Naive thymus-derived CD4-positive, alpha-beta T cell (primary cell): ENCODE measurements at regions of chr20 and their contacts with region 1.

Region 1: DNA sequence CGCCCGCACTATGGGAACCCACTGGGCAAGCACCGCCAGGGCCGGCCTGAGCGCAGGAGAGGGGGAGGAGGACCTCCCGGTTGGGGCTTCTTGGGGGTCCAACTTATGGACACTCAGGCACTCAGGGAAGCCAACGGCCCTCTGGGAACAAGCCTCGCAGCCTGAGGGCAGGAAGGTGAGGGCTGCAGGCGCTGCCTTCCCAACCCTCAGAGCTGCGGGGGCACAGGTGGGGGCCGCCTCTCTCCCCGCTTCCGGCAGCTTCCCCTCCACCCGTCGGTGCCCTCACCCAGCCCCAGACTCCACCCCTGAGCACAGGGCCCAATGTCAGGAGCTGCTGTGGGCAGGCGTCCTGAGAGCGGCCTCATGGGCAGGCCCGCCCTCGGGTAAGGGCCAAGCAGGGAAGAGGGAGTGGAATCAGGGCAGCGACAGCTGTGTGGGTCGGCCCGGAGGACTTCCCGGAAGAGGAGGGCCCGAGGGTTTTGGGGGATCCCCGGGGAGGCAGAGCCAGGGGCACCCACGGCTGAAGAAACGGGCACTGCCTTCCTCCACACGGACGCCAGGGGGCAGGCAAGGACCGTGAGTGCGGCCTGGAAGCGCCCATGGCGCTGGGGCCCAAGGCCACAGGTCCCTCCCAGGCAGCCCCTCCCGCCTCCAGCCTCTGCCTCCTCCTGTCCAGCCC is 488 bp upstream of the PTK6 start:
- DNase-seq: peak; percentile 88 to 97 (median 92)
- ATAC-seq: peak; percentile 94
- H3K4me3 ChIP-seq: peak overlapping the region; percentile 68
- H3K4me3 Mint-ChIP-seq: peak overlapping the region; percentile 48 to 86 (median 75)
- H3K27ac ChIP-seq: peak overlapping the region; percentile 83
- H3K27ac Mint-ChIP-seq: peak overlapping the region; percentile 36 to 91 (median 78)
- H3K4me1 ChIP-seq: peaks cover 15 to 21% of the 10 kb centered on the region in 2 donors
- H3K4me1 Mint-ChIP-seq: peaks cover 0 to 11% (median 7%) of the 10 kb centered on the region in 7 donors
- H3K27me3 ChIP-seq: no peaks in the 10 kb centered on the region
- H3K27me3 Mint-ChIP-seq: no peaks in the 10 kb centered on the region

Region 2: GRCh38 chr20:63409459-63410435 is 127.9 kb before region 1 on chr20:
- CTCF ChIA-PET with region 1: no interaction called
- POLR2A ChIA-PET with region 1: no interaction called
- intact Hi-C with region 1: no loop called
- DNase-seq: peak in 3 of 9 donors; percentile 21 to 39 (median 23)
- ATAC-seq: no peak
- H3K4me3 ChIP-seq: no peak overlapping the region
- H3K4me3 Mint-ChIP-seq: peak overlapping the region in 2 of 10 donors; percentile 9 to 48
- H3K27ac ChIP-seq: no peak overlapping the region
- H3K27ac Mint-ChIP-seq: peak overlapping the region in 1 of 9 donors; percentile 75
- H3K4me1 ChIP-seq: peaks cover 0 to 6% of the 10 kb centered on the region in 2 donors
- H3K4me1 Mint-ChIP-seq: peaks cover 3 to 15% (median 9%) of the 10 kb centered on the region in 7 donors
- H3K27me3 ChIP-seq: no peaks in the 10 kb centered on the region
- H3K27me3 Mint-ChIP-seq: peaks cover 0 to 4% (median 0%) of the 10 kb centered on the region in 5 donors

Region 3: DNA sequence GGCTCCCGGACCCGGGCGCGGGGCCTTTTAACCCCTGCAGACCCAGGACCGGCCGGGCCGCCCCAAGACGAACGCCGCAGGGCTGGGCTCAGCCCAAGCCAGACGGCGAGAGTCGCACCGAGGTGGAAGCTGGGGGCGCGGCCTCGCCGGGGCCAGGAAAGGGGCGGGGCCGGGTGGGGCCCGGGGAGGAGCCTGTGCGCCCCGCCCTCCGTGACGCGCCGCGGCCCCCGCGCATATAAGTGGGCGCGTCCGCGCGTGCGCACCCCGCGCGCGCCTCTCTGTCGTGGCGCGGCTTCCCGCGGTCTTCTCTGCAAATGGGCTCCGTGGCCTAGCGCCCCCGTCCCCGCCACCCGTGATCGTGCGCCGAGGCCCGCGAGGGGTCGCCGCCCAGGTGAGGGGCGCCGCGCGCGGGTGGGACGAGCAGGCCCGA is 17.1 kb before region 1 on chr20 and contains the start of gene PPDPF:
- CTCF ChIA-PET with region 1: interaction called, 5 read pairs
- POLR2A ChIA-PET with region 1: interaction called, 89 read pairs
- intact Hi-C with region 1: loop called (anchors 1 kb)
- DNase-seq: peak; percentile 76 to 92 (median 84)
- ATAC-seq: peak; percentile 96
- H3K4me3 ChIP-seq: peak within 1 kb of the TSS; percentile 86
- H3K4me3 Mint-ChIP-seq: peak within 1 kb of the TSS; percentile 65 to 89 (median 81)
- H3K27ac ChIP-seq: peak within 1 kb of the TSS; percentile 88
- H3K27ac Mint-ChIP-seq: peak within 1 kb of the TSS in 7 of 9 donors; percentile 51 to 88 (median 79)
- H3K4me1 ChIP-seq: peaks cover 11 to 14% of the 10 kb centered on the region in 2 donors
- H3K4me1 Mint-ChIP-seq: peaks cover 4 to 22% (median 9%) of the 10 kb centered on the region in 7 donors
- H3K27me3 ChIP-seq: no peaks in the 10 kb centered on the region
- H3K27me3 Mint-ChIP-seq: peaks cover 0 to 7% (median 0%) of the 10 kb centered on the region in 5 donors
- total RNA-seq, gene PPDPF: 138 to 225 (median 184) TPM

Region 4: DNA sequence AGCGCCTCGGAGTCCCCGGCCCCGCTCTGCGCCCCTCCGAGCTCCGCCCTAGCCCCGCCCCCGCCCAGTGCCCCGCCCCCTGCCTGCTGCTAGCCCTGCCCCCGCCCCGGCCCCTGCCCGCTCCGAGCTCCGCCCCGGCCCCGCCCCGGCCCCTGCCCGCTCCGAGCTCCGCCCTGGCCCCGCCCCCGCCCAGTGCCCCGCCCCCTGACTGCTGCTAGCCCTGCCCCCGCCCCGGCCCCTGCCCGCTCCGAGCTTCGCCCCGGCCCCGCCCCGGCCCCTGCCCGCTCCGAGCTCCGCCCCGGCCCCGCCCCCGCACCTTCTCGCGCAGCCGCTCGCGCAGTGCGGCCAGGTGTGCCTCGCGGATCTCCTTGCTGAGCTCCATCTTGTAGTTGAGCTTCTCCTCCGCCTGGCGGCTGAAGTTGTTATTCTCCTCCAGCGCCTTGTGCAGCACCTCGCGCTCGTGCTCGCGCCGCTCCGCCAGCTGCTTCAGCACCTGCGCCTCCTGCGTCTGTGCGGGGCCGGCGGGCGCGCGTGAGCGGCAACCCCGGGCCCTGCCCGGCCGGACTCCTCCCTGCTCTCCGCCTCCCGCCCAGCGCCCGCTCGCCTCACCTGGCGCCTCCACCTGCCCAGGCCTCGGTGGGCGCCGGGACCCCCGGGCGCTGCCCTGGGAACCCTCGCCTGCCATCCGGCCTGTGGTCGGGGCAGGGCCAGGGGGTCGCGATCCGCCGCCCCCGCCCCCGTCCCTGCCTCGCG is 104.3 kb after region 1 on chr20:
- CTCF ChIA-PET with region 1: interaction called, 9 read pairs
- POLR2A ChIA-PET with region 1: interaction called, 14 read pairs
- intact Hi-C with region 1: loop called (anchors 1 kb)
- DNase-seq: peak; percentile 94 to 98 (median 97)
- ATAC-seq: peak; percentile 86
- H3K4me3 ChIP-seq: peak overlapping the region; percentile 89
- H3K4me3 Mint-ChIP-seq: peak overlapping the region; percentile 57 to 92 (median 76)
- H3K27ac ChIP-seq: peak overlapping the region; percentile 90
- H3K27ac Mint-ChIP-seq: peak overlapping the region; percentile 66 to 98 (median 85)
- H3K4me1 ChIP-seq: peaks cover 23 to 24% of the 10 kb centered on the region in 2 donors
- H3K4me1 Mint-ChIP-seq: peaks cover 16 to 41% (median 28%) of the 10 kb centered on the region in 7 donors
- H3K27me3 ChIP-seq: no peaks in the 10 kb centered on the region
- H3K27me3 Mint-ChIP-seq: peaks cover 0 to 2% (median 0%) of the 10 kb centered on the region in 5 donors

Region 5: DNA sequence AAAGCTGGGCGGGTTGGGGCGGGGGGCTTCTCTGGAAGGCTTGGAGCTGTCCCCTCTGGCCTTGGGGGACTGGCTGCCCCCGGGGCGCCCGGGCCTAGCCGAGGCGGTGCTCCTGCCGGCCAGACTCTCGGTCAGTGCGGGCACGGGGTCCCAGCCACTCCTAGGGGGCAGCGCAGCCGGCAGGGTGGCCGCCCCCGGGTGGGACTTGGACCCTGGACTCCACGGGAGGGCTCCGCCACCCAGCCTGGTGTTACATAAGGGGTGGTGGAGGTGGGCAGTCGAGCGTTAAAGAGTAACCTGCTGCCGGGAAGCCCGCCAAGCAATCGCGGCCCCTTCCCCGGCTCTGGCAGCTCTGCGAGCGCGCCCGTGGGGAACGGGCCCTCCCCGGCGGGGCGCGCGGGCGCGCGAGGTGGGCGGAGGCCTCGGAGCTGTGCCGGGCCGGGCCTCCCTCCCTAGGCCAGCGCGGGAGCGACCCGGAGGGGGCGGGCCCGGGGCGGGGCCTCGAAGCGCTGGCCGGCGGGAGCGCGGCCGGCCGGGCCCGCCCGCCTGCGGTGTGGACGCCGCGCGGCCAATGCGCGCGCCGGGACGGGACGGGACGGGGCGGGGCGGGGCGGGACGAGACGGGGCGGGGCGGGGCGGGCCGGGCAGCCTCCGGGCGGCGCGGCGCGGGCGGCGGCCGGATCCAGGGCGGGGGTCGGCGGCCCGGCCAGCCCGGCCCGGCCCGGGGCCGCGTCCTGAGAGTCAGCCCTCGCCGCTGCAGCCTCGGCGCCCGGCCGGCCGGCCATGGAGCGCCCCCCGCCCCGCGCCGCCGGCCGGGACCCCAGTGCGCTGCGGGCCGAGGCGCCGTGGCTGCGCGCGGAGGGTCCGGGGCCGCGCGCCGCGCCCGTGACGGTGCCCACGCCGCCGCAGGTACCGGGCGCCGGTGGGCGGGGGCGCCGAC is 201.7 kb after region 1 on chr20 and contains the start of gene SLC2A4RG:
- CTCF ChIA-PET with region 1: interaction called, 5 read pairs
- POLR2A ChIA-PET with region 1: interaction called, 3 read pairs
- intact Hi-C with region 1: loop called in 1 of 2 experiments (anchors 5 kb)
- DNase-seq: peak; percentile 49 to 86 (median 69)
- ATAC-seq: peak; percentile 62
- H3K4me3 ChIP-seq: peak within 1 kb of the TSS; percentile 99
- H3K4me3 Mint-ChIP-seq: peak within 1 kb of the TSS; percentile 33 to 92 (median 80)
- H3K27ac ChIP-seq: peak within 1 kb of the TSS; percentile 71
- H3K27ac Mint-ChIP-seq: peak within 1 kb of the TSS in 1 of 9 donors; percentile 38
- H3K4me1 ChIP-seq: peaks cover 21 to 29% of the 10 kb centered on the region in 2 donors
- H3K4me1 Mint-ChIP-seq: peaks cover 7 to 20% (median 16%) of the 10 kb centered on the region in 7 donors
- H3K27me3 ChIP-seq: no peaks in the 10 kb centered on the region
- H3K27me3 Mint-ChIP-seq: no peaks in the 10 kb centered on the region
- total RNA-seq, gene SLC2A4RG: 88.7 to 136 (median 111) TPM

Region 6: GRCh38 chr20:63864847-63865640 is 327.4 kb after region 1 on chr20 and contains the start of gene TPD52L2:
- CTCF ChIA-PET with region 1: interaction called, 3 read pairs
- POLR2A ChIA-PET with region 1: no interaction called
- intact Hi-C with region 1: loop called (anchors 1 kb)
- DNase-seq: peak; percentile 86 to 98 (median 96)
- ATAC-seq: peak; percentile 91
- H3K4me3 ChIP-seq: peak within 1 kb of the TSS; percentile 74
- H3K4me3 Mint-ChIP-seq: peak within 1 kb of the TSS; percentile 88 to 100 (median 98)
- H3K27ac ChIP-seq: peak within 1 kb of the TSS; percentile 84
- H3K27ac Mint-ChIP-seq: peak within 1 kb of the TSS; percentile 91 to 99 (median 97)
- H3K4me1 ChIP-seq: peaks cover 11 to 14% of the 10 kb centered on the region in 2 donors
- H3K4me1 Mint-ChIP-seq: peaks cover 27 to 42% (median 36%) of the 10 kb centered on the region in 7 donors
- H3K27me3 ChIP-seq: no peaks in the 10 kb centered on the region
- H3K27me3 Mint-ChIP-seq: no peaks in the 10 kb centered on the region
- total RNA-seq, gene TPD52L2: 33.7 to 56.8 (median 43.2) TPM

Region 7: DNA sequence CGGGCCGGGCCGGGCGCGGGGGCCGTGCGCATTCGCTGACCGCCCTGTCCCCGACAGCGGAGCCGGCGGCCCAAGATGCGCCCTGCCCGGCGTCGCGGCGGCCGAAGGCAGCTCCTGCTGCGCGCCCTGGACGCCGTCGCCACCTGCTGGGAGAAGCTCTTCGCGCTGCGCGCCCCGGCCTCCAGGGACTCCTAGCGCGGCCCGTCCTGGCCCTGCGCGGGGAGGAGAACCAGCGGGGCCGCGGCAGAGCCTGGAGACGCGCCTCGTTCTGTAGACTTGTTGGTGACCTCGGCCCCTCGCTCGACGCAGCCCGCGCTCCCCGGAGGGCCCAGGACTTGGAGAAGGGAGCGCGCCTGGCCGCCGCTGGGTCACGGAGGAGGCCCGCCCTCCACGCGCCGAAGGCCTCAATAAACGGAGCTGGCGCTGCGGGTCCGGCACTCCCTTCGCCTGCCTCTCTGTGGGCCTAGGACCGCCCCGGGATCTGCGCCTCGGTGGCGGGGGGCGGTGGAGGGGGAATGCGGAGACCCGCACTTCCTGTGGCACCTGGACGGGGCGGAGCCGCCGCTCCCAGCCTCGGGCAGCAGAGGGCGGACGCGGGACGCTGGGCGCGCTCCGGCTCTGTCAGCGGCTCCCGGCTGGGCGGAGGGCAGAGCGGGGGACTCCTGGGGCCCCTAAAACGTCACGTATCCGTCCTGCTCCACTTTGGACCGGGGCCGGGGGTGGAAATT is 501.1 kb after region 1 on chr20:
- CTCF ChIA-PET with region 1: interaction called, 5 read pairs
- POLR2A ChIA-PET with region 1: interaction called, 6 read pairs
- intact Hi-C with region 1: loop called (anchors 1 to 5 kb)
- DNase-seq: peak; percentile 55 to 86 (median 76)
- ATAC-seq: peak; percentile 80
- H3K4me3 ChIP-seq: peak overlapping the region; percentile 62
- H3K4me3 Mint-ChIP-seq: peak overlapping the region; percentile 18 to 89 (median 71)
- H3K27ac ChIP-seq: peak overlapping the region; percentile 57
- H3K27ac Mint-ChIP-seq: peak overlapping the region in 4 of 9 donors; percentile 28 to 92 (median 64)
- H3K4me1 ChIP-seq: peaks cover 40 to 49% of the 10 kb centered on the region in 2 donors
- H3K4me1 Mint-ChIP-seq: peaks cover 26 to 49% (median 33%) of the 10 kb centered on the region in 7 donors
- H3K27me3 ChIP-seq: no peaks in the 10 kb centered on the region
- H3K27me3 Mint-ChIP-seq: no peaks in the 10 kb centered on the region

Region 8: DNA sequence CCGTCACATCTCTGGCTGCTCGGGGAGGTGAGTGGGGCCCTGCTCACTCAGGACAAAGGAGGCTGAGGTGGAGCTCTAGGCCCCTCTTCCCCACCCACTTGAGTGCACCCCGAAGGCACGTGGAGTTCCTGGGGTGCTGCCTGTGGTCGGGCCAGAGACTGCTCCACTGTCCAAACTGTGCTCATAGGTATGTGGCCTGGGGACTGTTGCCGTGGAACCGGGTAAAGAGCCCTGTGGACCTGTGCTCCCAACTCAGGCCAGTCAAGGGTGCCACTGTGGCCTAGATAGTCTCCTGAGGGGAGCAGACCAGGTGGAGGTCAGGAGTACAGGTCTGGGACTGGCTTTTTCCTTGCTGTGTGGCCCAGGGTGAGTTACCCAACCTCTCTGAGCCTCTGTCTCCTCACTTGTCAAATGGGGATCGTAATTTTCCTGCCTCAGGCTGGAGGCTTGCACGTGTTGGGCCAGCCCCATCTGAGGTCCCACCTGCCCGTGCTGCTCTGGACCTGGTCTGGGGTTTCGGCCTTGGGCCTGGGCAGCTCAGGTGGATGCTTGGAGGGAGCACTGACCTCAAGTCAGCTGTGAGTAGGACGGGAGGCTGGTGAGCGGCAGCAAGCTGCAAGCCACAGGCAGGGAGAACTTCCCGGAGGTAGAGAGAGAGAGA is 582.1 kb after region 1 on chr20:
- CTCF ChIA-PET with region 1: no interaction called
- POLR2A ChIA-PET with region 1: no interaction called
- intact Hi-C with region 1: loop called in 1 of 2 experiments (anchors 1 kb)
- DNase-seq: peak in 3 of 9 donors; percentile 2 to 24 (median 14)
- ATAC-seq: peak; percentile 18
- H3K4me3 ChIP-seq: peak overlapping the region; percentile 36
- H3K4me3 Mint-ChIP-seq: peak overlapping the region; percentile 39 to 80 (median 73)
- H3K27ac ChIP-seq: peak overlapping the region; percentile 22
- H3K27ac Mint-ChIP-seq: peak overlapping the region; percentile 69 to 85 (median 78)
- H3K4me1 ChIP-seq: peaks cover 5 to 9% of the 10 kb centered on the region in 2 donors
- H3K4me1 Mint-ChIP-seq: peaks cover 0 to 10% (median 8%) of the 10 kb centered on the region in 7 donors
- H3K27me3 ChIP-seq: no peaks in the 10 kb centered on the region
- H3K27me3 Mint-ChIP-seq: peaks cover 0 to 28% (median 0%) of the 10 kb centered on the region in 5 donors